GM10248 (cell line): ENCODE measurements at regions of chr6 and their contacts with region 1.

Region 1: GRCh38 chr6:39797752-39798151 is 5.6 kb downstream of the DAAM2 start:
- DNase-seq: no peak
- CTCF ChIP-seq: no peak

Region 2: GRCh38 chr6:39785281-39785680 is 12.5 kb before region 1 on chr6:
- CTCF ChIA-PET with region 1: interaction called, 11 read pairs
- POLR2A ChIA-PET with region 1: no interaction called
- DNase-seq: no peak
- CTCF ChIP-seq: no peak